IMR-90 (cell line): ENCODE measurements at regions of chr19 and their contacts with region 1.

Region 1: DNA sequence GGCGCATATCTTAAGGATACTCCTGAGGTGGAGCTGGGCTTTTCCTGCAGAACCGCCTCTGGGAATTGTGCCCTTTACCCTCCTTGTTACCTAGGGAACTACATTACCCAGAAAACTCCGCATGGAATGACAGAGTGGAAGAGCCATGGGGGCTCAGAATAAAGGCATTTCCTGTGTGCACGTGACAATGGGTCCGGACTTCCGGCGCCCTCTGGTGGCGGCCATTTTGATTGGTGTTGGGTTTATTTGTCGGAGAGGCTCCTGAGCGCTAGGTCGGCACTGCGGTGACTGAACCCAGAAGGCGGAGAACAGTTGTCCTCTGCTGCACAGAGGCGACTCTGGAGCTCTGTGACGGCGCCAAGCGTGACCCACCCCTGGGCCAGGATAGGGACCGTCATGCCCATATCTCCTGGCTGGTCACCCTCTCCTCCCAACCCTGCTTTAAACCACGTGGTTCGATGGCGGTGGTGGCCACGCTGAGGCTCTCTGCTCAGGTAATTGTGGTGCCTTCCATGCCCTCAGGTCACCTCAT is at the start of gene ZNF587B:
- DNase-seq: peak; percentile 74
- ATAC-seq: peak; percentile 92
- H3K4me3 ChIP-seq: peak within 1 kb of the TSS; percentile 56
- H3K27ac ChIP-seq: peak within 1 kb of the TSS; percentile 44
- H3K4me1 ChIP-seq: peaks cover 10% of the 10 kb centered on the region; the same call in 1 of the 2 replicates
- H3K27me3 ChIP-seq: no peaks in the 10 kb centered on the region
- CTCF ChIP-seq: peak; percentile 41
- POLR2A ChIP-seq: no peak; the same call in 1 of the 2 replicates
- RAD21 ChIP-seq: no peak
- total RNA-seq, gene ZNF587B: 32.2 and 33.9 TPM in 2 replicates

Region 2: DNA sequence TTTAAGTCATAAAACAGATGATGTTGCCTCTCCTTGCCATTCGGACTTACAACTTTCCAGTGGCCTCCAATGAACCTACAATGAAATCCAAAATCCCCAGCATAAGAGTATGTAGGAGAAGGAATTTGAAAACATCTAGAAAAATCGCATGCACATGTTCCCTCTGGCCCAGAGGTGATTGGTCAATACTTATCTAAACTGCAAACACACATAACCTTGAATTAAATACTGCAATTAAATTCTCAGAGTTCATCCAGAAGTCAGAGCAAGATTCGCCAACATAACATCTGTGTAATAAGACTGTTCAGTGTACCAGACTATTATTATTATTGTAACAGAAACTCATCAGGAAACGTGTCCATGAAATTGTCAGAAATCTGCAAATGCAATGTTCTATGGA is 792.6 kb before region 1 on chr19:
- CTCF ChIA-PET with region 1: no interaction called
- POLR2A ChIA-PET with region 1: interaction called, 13 read pairs
- dilution Hi-C with region 1: no loop called
- in situ Hi-C with region 1: no loop called
- intact Hi-C with region 1: no loop called
- DNase-seq: no peak
- ATAC-seq: no peak
- H3K4me3 ChIP-seq: no peak overlapping the region
- H3K27ac ChIP-seq: no peak overlapping the region
- H3K4me1 ChIP-seq: no peaks in the 10 kb centered on the region
- H3K27me3 ChIP-seq: no peaks in the 10 kb centered on the region
- CTCF ChIP-seq: no peak
- POLR2A ChIP-seq: no peak
- RAD21 ChIP-seq: no peak

Region 3: DNA sequence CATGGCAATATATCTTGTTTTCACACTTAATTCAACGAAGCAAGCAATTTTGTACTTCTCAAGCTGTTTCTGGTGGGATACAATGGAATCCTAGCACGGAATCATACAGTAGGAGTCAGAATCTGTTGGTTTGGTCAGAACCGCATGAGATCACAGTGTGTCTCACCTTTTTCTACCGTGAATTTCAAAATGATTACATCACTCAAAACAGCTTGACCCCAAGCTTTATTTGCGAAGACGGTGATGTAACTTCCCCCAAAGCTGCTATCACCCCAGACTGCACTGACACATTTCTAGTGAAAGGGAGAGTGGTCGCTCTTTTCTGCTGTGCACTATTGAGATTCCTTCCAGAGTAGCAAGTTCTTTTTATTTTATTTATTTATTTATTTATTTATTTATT is 134.6 kb after region 1 on chr19:
- CTCF ChIA-PET with region 1: no interaction called
- POLR2A ChIA-PET with region 1: no interaction called
- dilution Hi-C with region 1: no loop called
- in situ Hi-C with region 1: no loop called
- intact Hi-C with region 1: no loop called
- DNase-seq: no peak
- ATAC-seq: no peak
- H3K4me3 ChIP-seq: no peak overlapping the region
- H3K27ac ChIP-seq: no peak overlapping the region
- H3K4me1 ChIP-seq: no peaks in the 10 kb centered on the region
- H3K27me3 ChIP-seq: no peaks in the 10 kb centered on the region
- CTCF ChIP-seq: no peak
- POLR2A ChIP-seq: no peak
- RAD21 ChIP-seq: no peak